ENCODE measurements at regions of chr12 and their contacts with region 1.

Region 1: DNA sequence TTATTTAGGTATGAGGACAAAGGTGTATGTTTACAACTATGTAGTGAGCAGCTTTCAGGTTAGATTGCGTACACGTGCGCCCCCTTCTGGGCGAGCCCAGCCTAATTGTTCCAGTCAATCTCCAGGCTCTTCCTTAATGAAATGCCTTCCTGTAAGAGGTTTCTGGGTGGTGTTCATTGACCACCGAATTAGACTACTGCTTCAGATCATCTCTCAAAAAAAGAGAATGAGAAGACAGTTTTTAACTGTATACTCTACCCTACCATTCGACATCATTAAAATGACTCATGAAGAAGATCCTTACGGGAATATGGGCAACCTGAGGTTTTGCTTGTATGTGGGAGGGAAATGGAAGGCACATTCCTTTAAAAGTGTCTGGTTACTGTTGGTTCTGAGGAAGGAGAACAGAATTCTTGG is 2.1 kb downstream of the LUM start:
- DNase-seq: peak; percentile 81
- H3K4me3 ChIP-seq: peak overlapping the region; percentile 86
- H3K27ac ChIP-seq: peak overlapping the region; percentile 69
- H3K4me1 ChIP-seq: peaks cover 60% of the 10 kb centered on the region
- H3K27me3 ChIP-seq: no peaks in the 10 kb centered on the region

Region 2: DNA sequence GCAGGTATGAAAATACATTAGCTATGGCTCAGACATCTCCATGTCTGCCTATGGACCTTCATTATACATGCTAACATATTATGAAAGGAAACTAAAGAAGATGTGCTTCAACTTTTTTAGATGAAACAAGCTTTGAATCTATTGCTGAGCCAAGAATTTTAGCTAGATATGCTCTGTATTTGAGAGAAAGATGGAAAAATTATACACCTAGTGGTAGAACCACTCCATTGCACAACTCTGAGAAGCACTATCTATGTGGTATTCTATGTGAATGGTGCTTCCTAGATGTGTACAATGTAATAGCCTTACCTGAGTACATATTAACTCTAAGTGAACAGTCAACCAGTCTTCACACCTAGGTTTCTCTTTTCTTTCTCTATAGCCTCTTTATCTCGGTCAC is 121.6 kb before region 1 on chr12:
- in situ Hi-C with region 1: loop called (anchors 10 kb)
- DNase-seq: no peak
- H3K4me3 ChIP-seq: no peak overlapping the region
- H3K27ac ChIP-seq: no peak overlapping the region
- H3K4me1 ChIP-seq: no peaks in the 10 kb centered on the region
- H3K27me3 ChIP-seq: no peaks in the 10 kb centered on the region

Region 3: DNA sequence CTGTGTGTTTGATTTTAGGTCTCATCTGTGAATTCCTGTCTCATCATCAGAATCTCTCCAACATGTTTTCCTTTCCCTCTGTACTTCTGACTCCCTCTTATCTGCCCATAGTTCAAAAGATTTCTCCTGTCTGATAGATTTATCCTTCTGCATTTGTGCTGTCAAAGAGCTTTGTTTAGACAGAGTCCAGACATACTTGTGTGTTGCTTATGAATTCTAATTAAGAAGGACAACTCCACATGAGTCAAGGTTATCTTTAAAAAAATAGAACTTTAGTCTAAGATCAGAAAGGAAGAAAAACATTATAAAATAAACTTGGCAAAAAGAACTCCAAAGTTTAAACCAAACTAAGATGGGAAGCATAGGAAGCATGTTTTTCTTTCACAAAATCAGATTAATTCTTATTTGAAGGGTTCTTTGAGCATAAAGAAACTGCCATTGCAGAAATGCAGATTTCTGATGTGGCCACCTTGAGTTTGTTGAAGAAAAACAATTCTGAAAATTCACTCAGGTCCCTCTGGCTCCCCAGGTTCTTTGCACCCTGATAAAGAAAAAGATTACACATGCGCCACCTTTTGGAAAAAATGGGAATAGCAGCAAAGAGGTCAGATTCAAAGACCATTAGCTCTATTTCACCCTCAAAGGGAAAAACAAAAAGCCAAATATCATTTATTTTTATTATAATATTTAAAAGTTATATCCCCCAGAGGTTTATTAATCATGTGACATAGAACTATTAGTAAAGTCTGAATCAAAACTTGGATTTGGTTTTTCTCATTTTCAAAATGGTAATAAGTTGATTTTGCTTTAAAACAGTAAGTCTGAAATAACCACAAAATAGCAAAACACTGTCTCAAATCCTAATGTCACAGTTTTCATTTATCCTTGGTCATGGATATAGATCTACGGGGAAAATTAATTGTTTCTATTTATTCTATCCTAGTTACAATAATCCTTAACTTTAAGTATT is 217.2 kb after region 1 on chr12:
- in situ Hi-C with region 1: loop called (anchors 10 kb)
- DNase-seq: peak; percentile 52
- H3K4me3 ChIP-seq: peak overlapping the region; percentile 53
- H3K27ac ChIP-seq: peak overlapping the region; percentile 50
- H3K4me1 ChIP-seq: peaks cover 25% of the 10 kb centered on the region
- H3K27me3 ChIP-seq: no peaks in the 10 kb centered on the region